Naive thymus-derived CD4-positive, alpha-beta T cell (primary cell): ENCODE measurements at regions of chr16 and their contacts with region 1.

Region 1: GRCh38 chr16:10325783-10326543 is 59.9 kb upstream of the ATF7IP2 start:
- DNase-seq: no peak
- ATAC-seq: no peak
- H3K4me3 ChIP-seq: no peak overlapping the region
- H3K4me3 Mint-ChIP-seq: peak overlapping the region in 1 of 10 donors; percentile 63
- H3K27ac ChIP-seq: no peak overlapping the region
- H3K27ac Mint-ChIP-seq: peak overlapping the region in 1 of 9 donors; percentile 74
- H3K4me1 ChIP-seq: peaks cover 0 to 19% of the 10 kb centered on the region in 2 donors
- H3K4me1 Mint-ChIP-seq: peaks cover 0 to 35% (median 16%) of the 10 kb centered on the region in 7 donors
- H3K27me3 ChIP-seq: no peaks in the 10 kb centered on the region
- H3K27me3 Mint-ChIP-seq: no peaks in the 10 kb centered on the region

Region 2: GRCh38 chr16:10362077-10362863 is 36.3 kb after region 1 on chr16:
- CTCF ChIA-PET with region 1: interaction called, 3 read pairs
- POLR2A ChIA-PET with region 1: interaction called, 4 read pairs
- intact Hi-C with region 1: loop called (anchors 2 to 5 kb)
- DNase-seq: peak in 6 of 9 donors; percentile 21 to 50 (median 37)
- ATAC-seq: peak; percentile 51
- H3K4me3 ChIP-seq: no peak overlapping the region
- H3K4me3 Mint-ChIP-seq: peak overlapping the region; percentile 50 to 84 (median 71)
- H3K27ac ChIP-seq: no peak overlapping the region
- H3K27ac Mint-ChIP-seq: peak overlapping the region; percentile 76 to 94 (median 85)
- H3K4me1 ChIP-seq: peaks cover 0 to 16% of the 10 kb centered on the region in 2 donors
- H3K4me1 Mint-ChIP-seq: peaks cover 8 to 39% (median 27%) of the 10 kb centered on the region in 7 donors
- H3K27me3 ChIP-seq: no peaks in the 10 kb centered on the region
- H3K27me3 Mint-ChIP-seq: peaks cover 0 to 5% (median 0%) of the 10 kb centered on the region in 5 donors